ENCODE measurements at regions of chr12 and their contacts with region 1.

Region 1: DNA sequence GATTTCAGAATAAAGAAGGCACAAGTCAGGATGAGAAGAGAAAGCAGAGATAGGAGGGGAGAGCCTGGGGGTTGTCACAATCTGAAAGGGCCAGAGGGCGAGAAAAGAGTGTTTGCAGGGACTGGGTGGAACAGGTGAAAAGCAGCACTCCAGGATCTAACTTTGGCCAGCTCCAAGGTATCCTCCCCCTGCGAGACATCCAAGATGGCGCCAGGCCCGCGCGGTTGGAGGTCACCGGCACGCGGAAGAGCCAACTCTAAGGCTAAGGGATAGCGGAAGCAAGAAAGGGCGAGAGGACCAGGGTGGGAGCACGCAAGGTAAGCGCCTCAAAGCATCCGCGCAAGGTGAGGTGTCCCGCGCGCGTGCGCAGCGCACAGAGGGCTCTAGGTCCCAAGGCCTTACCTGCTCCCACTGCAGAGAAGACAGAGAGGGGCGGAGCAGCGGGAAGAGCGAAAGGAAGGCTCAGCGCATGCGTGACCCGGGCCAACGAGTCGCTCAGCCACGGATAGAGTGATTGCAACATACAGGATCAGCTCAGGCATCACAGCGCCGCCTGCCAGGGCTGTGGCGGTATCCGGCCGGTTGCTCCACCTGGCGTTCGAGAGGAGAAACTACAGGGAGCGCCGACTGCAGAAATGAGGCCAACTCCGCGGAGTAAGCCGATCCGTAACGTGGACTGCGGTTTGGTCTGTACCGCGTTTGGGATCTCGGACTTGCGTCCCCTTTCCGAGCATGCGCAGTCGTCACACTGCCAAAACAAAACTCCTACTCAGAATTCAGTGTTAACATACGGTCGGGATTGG is at the start of gene ATP5MC2:
- DNase-seq: peak; percentile 92 to 98 (median 97)
- ATAC-seq: peak; percentile 97
- H3K4me3 ChIP-seq: peak within 1 kb of the TSS; percentile 64
- H3K4me3 Mint-ChIP-seq: peak within 1 kb of the TSS; percentile 91 to 99 (median 94)
- H3K27ac ChIP-seq: peak within 1 kb of the TSS; percentile 76
- H3K27ac Mint-ChIP-seq: peak within 1 kb of the TSS; percentile 91 to 98 (median 95)
- H3K4me1 ChIP-seq: peaks cover 7 to 21% of the 10 kb centered on the region in 2 donors
- H3K4me1 Mint-ChIP-seq: peaks cover 21 to 38% (median 32%) of the 10 kb centered on the region in 7 donors
- H3K27me3 ChIP-seq: no peaks in the 10 kb centered on the region
- H3K27me3 Mint-ChIP-seq: peaks cover 16 to 35% (median 21%) of the 10 kb centered on the region in 5 donors
- total RNA-seq, gene ATP5MC2: 237 to 332 (median 275) TPM

Region 2: GRCh38 chr12:53129170-53129569 is 546.7 kb before region 1 on chr12:
- CTCF ChIA-PET with region 1: no interaction called
- POLR2A ChIA-PET with region 1: no interaction called
- intact Hi-C with region 1: no loop called
- DNase-seq: no peak
- ATAC-seq: peak; percentile 36
- H3K4me3 ChIP-seq: no peak overlapping the region
- H3K4me3 Mint-ChIP-seq: no peak overlapping the region
- H3K27ac ChIP-seq: no peak overlapping the region
- H3K27ac Mint-ChIP-seq: no peak overlapping the region
- H3K4me1 ChIP-seq: no peaks in the 10 kb centered on the region
- H3K4me1 Mint-ChIP-seq: peaks cover 0 to 8% (median 0%) of the 10 kb centered on the region in 7 donors
- H3K27me3 ChIP-seq: no peaks in the 10 kb centered on the region
- H3K27me3 Mint-ChIP-seq: peaks cover 0 to 21% (median 8%) of the 10 kb centered on the region in 5 donors

Region 3: GRCh38 chr12:53500776-53501614 is 174.9 kb before region 1 on chr12 and contains the start of gene TARBP2:
- CTCF ChIA-PET with region 1: no interaction called
- POLR2A ChIA-PET with region 1: interaction called, 6 read pairs
- intact Hi-C with region 1: loop called in 1 of 2 experiments (anchors 1 kb)
- DNase-seq: peak; percentile 87 to 99 (median 98)
- ATAC-seq: peak; percentile 87
- H3K4me3 ChIP-seq: peak within 1 kb of the TSS; percentile 84
- H3K4me3 Mint-ChIP-seq: peak within 1 kb of the TSS; percentile 86 to 96 (median 92)
- H3K27ac ChIP-seq: peak within 1 kb of the TSS; percentile 98
- H3K27ac Mint-ChIP-seq: peak within 1 kb of the TSS; percentile 87 to 100 (median 97)
- H3K4me1 ChIP-seq: peaks cover 24 to 27% of the 10 kb centered on the region in 2 donors
- H3K4me1 Mint-ChIP-seq: peaks cover 15 to 56% (median 43%) of the 10 kb centered on the region in 7 donors
- H3K27me3 ChIP-seq: no peaks in the 10 kb centered on the region
- H3K27me3 Mint-ChIP-seq: no peaks in the 10 kb centered on the region
- total RNA-seq, gene TARBP2: 25.1 to 45.2 (median 40.7) TPM

Region 4: DNA sequence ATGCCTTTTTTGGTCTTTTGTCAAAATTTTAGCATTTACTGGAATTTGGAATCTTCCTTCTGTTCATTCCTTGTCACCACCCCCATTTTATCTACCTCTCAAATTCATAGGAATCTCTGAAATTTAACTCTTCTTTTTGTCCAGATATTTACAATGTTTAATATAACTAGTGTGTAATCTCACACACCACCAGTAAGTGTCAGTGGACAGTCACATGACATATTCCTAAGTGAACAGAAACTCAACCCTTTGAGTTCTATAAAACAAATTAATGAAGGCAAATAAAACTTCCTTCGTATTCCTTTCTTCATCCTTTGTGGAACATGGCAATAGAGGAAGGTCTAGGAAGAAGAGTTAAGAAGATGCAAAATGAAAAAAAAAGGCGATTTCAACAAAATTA is 76.3 kb before region 1 on chr12:
- CTCF ChIA-PET with region 1: no interaction called
- POLR2A ChIA-PET with region 1: interaction called, 3 read pairs
- intact Hi-C with region 1: loop called in 1 of 2 experiments (anchors 1 kb)
- DNase-seq: no peak
- ATAC-seq: no peak
- H3K4me3 ChIP-seq: no peak overlapping the region
- H3K4me3 Mint-ChIP-seq: no peak overlapping the region
- H3K27ac ChIP-seq: no peak overlapping the region
- H3K27ac Mint-ChIP-seq: no peak overlapping the region
- H3K4me1 ChIP-seq: no peaks in the 10 kb centered on the region
- H3K4me1 Mint-ChIP-seq: peaks cover 13 to 35% (median 28%) of the 10 kb centered on the region in 7 donors
- H3K27me3 ChIP-seq: no peaks in the 10 kb centered on the region
- H3K27me3 Mint-ChIP-seq: no peaks in the 10 kb centered on the region

Region 5: DNA sequence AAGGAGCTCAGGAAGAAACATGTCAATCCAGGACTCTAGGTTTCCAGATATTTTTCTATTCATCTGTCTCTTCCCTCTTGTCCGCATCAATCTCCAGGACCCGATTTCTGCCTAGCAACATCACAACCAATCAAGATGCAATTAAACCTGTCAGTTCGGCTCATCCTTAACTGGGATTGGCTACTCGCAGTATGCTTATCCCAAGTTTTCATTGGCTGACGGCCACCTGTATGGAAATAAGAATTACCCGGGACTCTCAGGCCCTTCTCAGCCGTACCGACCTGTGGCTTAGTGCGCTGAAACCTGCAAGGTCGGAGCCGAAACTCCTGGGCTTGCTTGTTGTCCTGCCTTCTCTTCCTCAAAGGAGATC is 20.4 kb after region 1 on chr12:
- CTCF ChIA-PET with region 1: interaction called, 4 read pairs
- POLR2A ChIA-PET with region 1: interaction called, 3 read pairs
- intact Hi-C with region 1: loop called in 1 of 2 experiments (anchors 2 kb)
- DNase-seq: no peak
- ATAC-seq: no peak
- H3K4me3 ChIP-seq: no peak overlapping the region
- H3K4me3 Mint-ChIP-seq: peak overlapping the region; percentile 12 to 88 (median 78)
- H3K27ac ChIP-seq: no peak overlapping the region
- H3K27ac Mint-ChIP-seq: no peak overlapping the region
- H3K4me1 ChIP-seq: peaks cover 7 to 23% of the 10 kb centered on the region in 2 donors
- H3K4me1 Mint-ChIP-seq: peaks cover 26 to 33% (median 30%) of the 10 kb centered on the region in 7 donors
- H3K27me3 ChIP-seq: peaks cover 26 to 30% of the 10 kb centered on the region in 2 donors
- H3K27me3 Mint-ChIP-seq: peaks cover 80 to 91% (median 86%) of the 10 kb centered on the region in 5 donors

Region 6: GRCh38 chr12:54431911-54432814 is 756.3 kb after region 1 on chr12:
- CTCF ChIA-PET with region 1: no interaction called
- POLR2A ChIA-PET with region 1: no interaction called
- intact Hi-C with region 1: no loop called
- DNase-seq: peak in 1 of 9 donors; percentile 49
- ATAC-seq: no peak
- H3K4me3 ChIP-seq: no peak overlapping the region
- H3K4me3 Mint-ChIP-seq: peak overlapping the region in 2 of 10 donors; percentile 5 to 80
- H3K27ac ChIP-seq: no peak overlapping the region
- H3K27ac Mint-ChIP-seq: peak overlapping the region in 5 of 9 donors; percentile 7 to 87 (median 49)
- H3K4me1 ChIP-seq: peaks cover 13 to 23% of the 10 kb centered on the region in 2 donors
- H3K4me1 Mint-ChIP-seq: peaks cover 20 to 56% (median 38%) of the 10 kb centered on the region in 7 donors
- H3K27me3 ChIP-seq: no peaks in the 10 kb centered on the region
- H3K27me3 Mint-ChIP-seq: peaks cover 0 to 13% (median 0%) of the 10 kb centered on the region in 5 donors

Region 7: DNA sequence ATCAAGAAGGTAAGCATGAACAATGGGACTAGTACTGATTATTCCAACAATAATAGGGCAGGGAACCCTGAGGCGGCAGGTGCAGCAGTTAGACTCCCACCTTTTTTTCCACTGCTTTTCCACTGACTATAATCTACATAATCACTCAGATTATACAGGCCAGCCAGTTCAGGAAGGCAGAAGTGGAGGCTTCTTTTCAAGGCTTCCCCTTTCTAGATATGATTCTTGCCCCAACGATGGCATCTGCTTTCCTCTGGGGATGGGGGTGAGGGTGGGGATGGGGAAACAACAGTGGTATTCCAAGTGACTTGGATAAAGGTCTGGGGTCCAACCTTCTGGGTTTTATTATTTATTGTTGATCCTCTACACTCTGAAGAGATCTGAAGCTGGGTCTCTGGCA is 822.0 kb after region 1 on chr12:
- CTCF ChIA-PET with region 1: no interaction called
- POLR2A ChIA-PET with region 1: no interaction called
- intact Hi-C with region 1: loop called in 1 of 2 experiments (anchors 1 kb)
- DNase-seq: no peak
- ATAC-seq: peak; percentile 3
- H3K4me3 ChIP-seq: peak overlapping the region; percentile 89
- H3K4me3 Mint-ChIP-seq: peak overlapping the region; percentile 97 to 99 (median 98)
- H3K27ac ChIP-seq: peak overlapping the region; percentile 77
- H3K27ac Mint-ChIP-seq: peak overlapping the region; percentile 88 to 98 (median 96)
- H3K4me1 ChIP-seq: peaks cover 19 to 31% of the 10 kb centered on the region in 2 donors
- H3K4me1 Mint-ChIP-seq: peaks cover 30 to 58% (median 41%) of the 10 kb centered on the region in 7 donors
- H3K27me3 ChIP-seq: no peaks in the 10 kb centered on the region
- H3K27me3 Mint-ChIP-seq: no peaks in the 10 kb centered on the region

Measured in naive thymus-derived CD4-positive, alpha-beta T cell (primary cell).